GM18951 (cell line): ENCODE measurements at regions of chr3 and their contacts with region 1.

Region 1: GRCh38 chr3:64533617-64534317 is 154.0 kb downstream of the ADAMTS9 start:
- POLR2A ChIP-seq: no peak

Region 2: DNA sequence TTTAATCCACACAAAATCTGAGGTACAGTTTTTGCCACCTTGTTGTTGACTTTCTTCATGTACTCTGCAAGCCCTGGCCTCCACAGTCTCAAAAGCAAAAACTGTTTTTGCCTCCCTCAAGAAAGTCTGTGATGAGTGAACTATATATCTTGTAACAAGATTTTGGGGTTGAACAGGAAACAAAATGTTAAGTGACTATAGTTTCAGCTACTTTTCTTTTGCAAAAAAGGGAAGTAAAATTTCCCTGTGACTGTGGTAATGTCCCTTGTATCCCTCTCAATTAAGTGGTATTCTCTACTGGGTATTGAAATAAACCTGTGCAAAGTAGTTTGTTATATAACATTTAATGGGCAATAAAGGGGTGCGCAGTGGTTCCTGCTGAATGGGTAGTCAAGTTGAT is 600.3 kb before region 1 on chr3:
- in situ Hi-C with region 1: no loop called
- POLR2A ChIP-seq: no peak

Region 3: GRCh38 chr3:64229903-64230302 is 303.9 kb before region 1 on chr3:
- in situ Hi-C with region 1: no loop called
- POLR2A ChIP-seq: no peak

Region 4: GRCh38 chr3:65672871-65673815 is 1139.4 kb after region 1 on chr3:
- in situ Hi-C with region 1: loop called (anchors 25 kb)
- POLR2A ChIP-seq: no peak

Region 5: DNA sequence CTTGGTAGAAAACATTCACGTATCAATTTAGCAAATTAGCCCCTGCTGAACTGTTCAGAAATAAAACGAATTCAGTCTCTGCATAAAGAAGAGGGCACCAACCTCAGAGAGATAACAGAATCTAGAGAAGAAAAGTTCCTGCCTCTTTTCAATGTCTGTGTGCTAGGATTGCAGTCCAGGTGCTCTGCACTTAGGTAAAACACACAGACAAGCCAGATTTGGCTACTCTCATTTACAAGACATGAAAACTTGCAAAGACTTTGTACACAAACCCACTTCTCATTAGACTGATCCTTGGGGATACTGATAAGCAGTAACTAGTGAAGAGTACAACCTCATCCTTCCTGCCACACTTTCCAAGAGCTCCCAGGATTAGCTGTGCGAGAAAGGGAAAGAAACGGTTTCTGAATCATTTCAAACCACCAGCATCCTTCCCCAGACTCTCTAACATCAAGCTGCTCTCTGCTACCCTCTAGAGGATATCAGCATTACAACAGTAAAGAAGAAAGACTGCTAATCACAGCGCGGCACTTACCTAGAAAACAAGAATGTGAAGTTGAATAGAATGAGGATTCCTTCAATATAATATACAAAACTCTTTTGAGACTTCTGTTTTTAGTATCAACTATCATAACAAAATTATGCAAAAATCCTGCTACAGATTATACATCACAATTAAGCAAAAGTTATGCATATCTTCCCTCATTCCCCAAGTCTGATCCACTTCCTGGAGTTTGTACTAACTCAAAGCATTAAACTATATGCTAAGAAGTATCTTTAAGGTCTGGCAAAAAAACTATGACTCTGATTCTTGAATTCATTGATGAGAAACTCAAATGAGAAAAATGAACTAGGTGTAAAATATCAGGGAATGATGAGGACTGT is 1198.5 kb after region 1 on chr3:
- in situ Hi-C with region 1: loop called (anchors 25 kb)
- POLR2A ChIP-seq: no peak